Mammary epithelial cell (primary cell): ENCODE measurements at regions of chr19 and their contacts with region 1.

Region 1: GRCh38 chr19:3852614-3853254 is 16.1 kb downstream of the ZFR2 start:
- DNase-seq: peak; percentile 95
- H3K4me3 ChIP-seq: no peak overlapping the region
- H3K27ac ChIP-seq: no peak overlapping the region
- H3K4me1 ChIP-seq: no peaks in the 10 kb centered on the region
- H3K27me3 ChIP-seq: peaks cover 22% of the 10 kb centered on the region
- CTCF ChIP-seq: peak; percentile 25 to 68

Region 2: DNA sequence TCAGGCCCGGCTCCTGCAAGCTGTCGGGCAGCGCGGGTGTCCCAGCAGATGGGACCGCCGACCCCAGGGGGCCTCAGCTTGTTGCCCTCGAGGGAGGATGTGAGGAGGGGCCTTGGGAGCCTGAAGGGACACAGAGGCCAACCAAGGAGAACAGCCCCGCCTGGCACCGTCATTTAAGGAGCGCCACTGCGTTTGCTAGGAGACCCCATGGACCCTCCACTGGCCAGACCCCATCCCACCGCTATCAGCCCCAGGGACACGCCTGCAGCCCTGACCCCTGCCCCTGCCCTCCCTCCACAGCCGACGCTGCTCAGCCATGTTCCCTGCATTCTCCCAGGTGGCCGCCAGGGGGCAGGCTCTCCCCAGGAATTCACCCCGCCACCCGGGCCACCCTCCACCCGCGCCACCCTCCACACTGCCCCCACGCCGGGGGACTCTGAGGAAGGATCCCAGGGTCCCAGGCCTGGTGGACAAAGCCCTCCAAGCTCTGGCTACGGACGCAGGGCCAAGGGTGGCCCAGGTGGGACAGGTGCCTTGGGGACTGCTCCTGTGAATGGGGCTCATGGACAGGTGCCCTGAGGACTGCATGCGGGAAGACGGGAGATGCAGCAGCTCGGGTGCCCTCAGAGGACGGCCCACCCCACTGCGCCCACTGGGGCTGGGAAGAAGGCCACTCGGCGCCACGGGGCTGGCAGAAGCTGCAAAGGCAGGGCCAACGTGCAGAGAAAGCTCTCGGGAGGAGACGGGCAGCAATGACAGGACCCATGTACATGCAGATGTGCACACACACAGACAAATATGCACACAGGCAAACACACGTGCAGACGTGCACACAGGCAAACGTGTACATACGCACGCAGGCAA is 186.8 kb before region 1 on chr19:
- CTCF ChIA-PET with region 1: interaction called, 4 read pairs
- dilution Hi-C with region 1: no loop called
- in situ Hi-C with region 1: no loop called
- intact Hi-C with region 1: loop called (anchors 1 kb)
- DNase-seq: peak; percentile 14
- H3K4me3 ChIP-seq: no peak overlapping the region
- H3K27ac ChIP-seq: no peak overlapping the region
- H3K4me1 ChIP-seq: peaks cover 22% of the 10 kb centered on the region
- H3K27me3 ChIP-seq: no peaks in the 10 kb centered on the region
- CTCF ChIP-seq: peak; percentile 72 to 90

Region 3: DNA sequence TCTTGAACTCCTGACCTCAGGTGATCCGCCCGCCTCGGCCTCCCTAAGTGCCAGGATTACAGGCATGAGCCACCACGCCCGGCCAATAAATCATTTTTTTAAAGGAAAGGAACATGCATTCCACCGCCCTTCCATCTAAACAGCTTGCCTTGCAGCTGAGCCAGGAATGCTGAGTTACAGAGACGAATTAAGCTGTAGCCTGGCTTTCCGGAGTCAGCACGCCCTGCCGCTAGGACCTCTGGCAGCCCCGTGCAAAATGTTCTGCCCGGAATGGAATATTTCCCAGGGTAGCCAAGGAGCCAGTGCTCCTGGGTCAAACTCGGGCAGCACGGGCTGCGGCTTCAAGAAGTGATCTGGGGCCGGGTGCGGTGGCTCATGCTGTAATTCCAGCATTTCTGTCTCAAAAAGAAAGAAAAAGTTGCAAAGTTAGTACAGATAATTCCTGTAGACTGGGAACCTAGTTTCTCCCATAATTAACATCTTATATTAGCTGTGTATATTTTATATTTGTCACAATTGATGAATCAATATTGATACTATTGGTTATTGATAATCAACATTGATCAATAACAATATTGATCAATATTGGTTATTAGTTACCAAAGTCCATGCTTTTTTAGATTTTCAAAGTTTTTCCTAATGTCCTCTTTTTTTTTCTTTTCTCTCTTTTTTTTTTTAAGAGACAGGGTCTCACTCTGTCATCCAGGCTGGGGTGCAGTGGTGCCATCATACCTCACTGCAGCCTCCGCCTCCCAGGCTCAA is 47.0 kb after region 1 on chr19:
- CTCF ChIA-PET with region 1: no interaction called
- dilution Hi-C with region 1: no loop called
- in situ Hi-C with region 1: loop called in 1 of 2 experiments (anchors 10 kb)
- intact Hi-C with region 1: no loop called
- DNase-seq: no peak
- H3K4me3 ChIP-seq: no peak overlapping the region
- H3K27ac ChIP-seq: no peak overlapping the region
- H3K4me1 ChIP-seq: no peaks in the 10 kb centered on the region
- H3K27me3 ChIP-seq: no peaks in the 10 kb centered on the region
- CTCF ChIP-seq: no peak

Region 4: GRCh38 chr19:4139614-4140236 is 287.0 kb after region 1 on chr19:
- CTCF ChIA-PET with region 1: no interaction called
- dilution Hi-C with region 1: no loop called
- in situ Hi-C with region 1: no loop called
- intact Hi-C with region 1: loop called (anchors 1 kb)
- DNase-seq: peak; percentile 54
- H3K4me3 ChIP-seq: no peak overlapping the region
- H3K27ac ChIP-seq: no peak overlapping the region
- H3K4me1 ChIP-seq: no peaks in the 10 kb centered on the region
- H3K27me3 ChIP-seq: no peaks in the 10 kb centered on the region
- CTCF ChIP-seq: peak; percentile 86 to 89

Region 5: GRCh38 chr19:4199699-4200293 is 347.1 kb after region 1 on chr19:
- CTCF ChIA-PET with region 1: no interaction called
- dilution Hi-C with region 1: loop called (anchors 5 kb)
- in situ Hi-C with region 1: no loop called
- intact Hi-C with region 1: loop called (anchors 1 kb)
- DNase-seq: no peak
- H3K4me3 ChIP-seq: no peak overlapping the region
- H3K27ac ChIP-seq: no peak overlapping the region
- H3K4me1 ChIP-seq: no peaks in the 10 kb centered on the region
- H3K27me3 ChIP-seq: peaks cover 5% of the 10 kb centered on the region
- CTCF ChIP-seq: peak in 1 of 2 donors; percentile 38

Region 6: GRCh38 chr19:4390567-4391305 is 538.0 kb after region 1 on chr19:
- CTCF ChIA-PET with region 1: interaction called, 24 read pairs
- dilution Hi-C with region 1: no loop called
- in situ Hi-C with region 1: no loop called
- intact Hi-C with region 1: no loop called
- DNase-seq: peak; percentile 73
- H3K4me3 ChIP-seq: no peak overlapping the region
- H3K27ac ChIP-seq: peak overlapping the region; percentile 66
- H3K4me1 ChIP-seq: peaks cover 43% of the 10 kb centered on the region
- H3K27me3 ChIP-seq: no peaks in the 10 kb centered on the region
- CTCF ChIP-seq: no peak